T-cell (primary cell): ENCODE measurements at regions of chr5 and their contacts with region 1.

Region 1: DNA sequence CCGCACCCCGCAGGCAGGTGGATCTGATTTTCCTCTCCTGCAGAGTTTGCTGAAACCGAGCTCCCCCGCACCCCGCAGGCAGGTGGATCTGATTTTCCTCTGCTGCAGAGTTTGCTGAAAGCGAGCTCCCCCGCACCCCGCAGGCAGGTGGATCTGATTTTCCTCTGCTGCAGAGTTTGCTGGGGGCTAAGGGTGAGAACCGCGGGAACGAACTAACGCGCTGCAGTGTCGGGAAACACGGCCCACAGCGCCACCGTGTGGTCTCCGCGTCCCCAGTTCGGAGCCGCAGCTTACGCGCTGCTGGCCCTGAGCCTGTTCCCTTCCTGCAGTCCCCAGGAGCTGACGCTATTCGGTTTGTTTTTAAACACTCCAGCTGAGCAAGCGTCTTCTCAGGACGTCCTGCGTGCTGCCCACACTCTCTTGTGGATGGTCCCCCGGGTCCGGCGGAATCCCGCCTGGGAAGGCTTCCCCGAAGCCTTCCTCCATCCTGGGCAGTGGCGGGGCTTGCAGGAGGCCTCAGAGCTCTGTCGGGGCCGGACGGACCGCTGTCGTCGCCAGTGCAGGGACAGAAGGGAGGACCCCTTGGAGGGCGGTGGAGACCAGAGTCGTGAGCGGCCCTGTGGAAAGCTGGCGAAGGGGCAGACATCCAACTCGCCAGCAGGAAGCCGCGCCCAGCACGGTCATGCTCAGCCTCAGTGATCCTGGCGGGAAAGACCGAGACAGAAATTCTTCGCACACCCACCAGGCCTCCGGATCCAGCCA is 121.2 kb upstream of the LPCAT1 start:
- DNase-seq: peak; percentile 38 to 93 (median 72)
- ATAC-seq: peak; percentile 88 to 92 (median 88)
- H3K4me3 ChIP-seq: peak overlapping the region in 1 of 2 donors; percentile 44
- H3K4me3 Mint-ChIP-seq: peak overlapping the region in 1 of 3 donors; percentile 30
- H3K27ac ChIP-seq: no peak overlapping the region
- H3K27ac Mint-ChIP-seq: no peak overlapping the region
- H3K4me1 ChIP-seq: peaks cover 0 to 17% of the 10 kb centered on the region in 2 experiments
- H3K4me1 Mint-ChIP-seq: peaks cover 10 to 18% (median 10%) of the 10 kb centered on the region in 3 donors
- H3K27me3 ChIP-seq: peaks cover 5 to 43% of the 10 kb centered on the region in 2 experiments
- H3K27me3 Mint-ChIP-seq: peaks cover 26 to 54% of the 10 kb centered on the region in 2 donors

Region 2: GRCh38 chr5:343461-344401 is 1301.3 kb before region 1 on chr5:
- CTCF ChIA-PET with region 1: no interaction called
- POLR2A ChIA-PET with region 1: no interaction called
- DNase-seq: peak in 27 of 35 experiments; percentile 6 to 63 (median 26)
- ATAC-seq: peak; percentile 69 to 88 (median 80)
- H3K4me3 ChIP-seq: peak overlapping the region in 1 of 2 donors; percentile 19
- H3K4me3 Mint-ChIP-seq: peak overlapping the region; percentile 62 to 76 (median 72)
- H3K27ac ChIP-seq: no peak overlapping the region
- H3K27ac Mint-ChIP-seq: no peak overlapping the region
- H3K4me1 ChIP-seq: peaks cover 7 to 17% of the 10 kb centered on the region in 2 experiments
- H3K4me1 Mint-ChIP-seq: peaks cover 5 to 19% (median 5%) of the 10 kb centered on the region in 3 donors
- H3K27me3 ChIP-seq: peaks cover 0 to 33% of the 10 kb centered on the region in 2 experiments
- H3K27me3 Mint-ChIP-seq: peaks cover 14 to 31% of the 10 kb centered on the region in 2 donors

Region 3: DNA sequence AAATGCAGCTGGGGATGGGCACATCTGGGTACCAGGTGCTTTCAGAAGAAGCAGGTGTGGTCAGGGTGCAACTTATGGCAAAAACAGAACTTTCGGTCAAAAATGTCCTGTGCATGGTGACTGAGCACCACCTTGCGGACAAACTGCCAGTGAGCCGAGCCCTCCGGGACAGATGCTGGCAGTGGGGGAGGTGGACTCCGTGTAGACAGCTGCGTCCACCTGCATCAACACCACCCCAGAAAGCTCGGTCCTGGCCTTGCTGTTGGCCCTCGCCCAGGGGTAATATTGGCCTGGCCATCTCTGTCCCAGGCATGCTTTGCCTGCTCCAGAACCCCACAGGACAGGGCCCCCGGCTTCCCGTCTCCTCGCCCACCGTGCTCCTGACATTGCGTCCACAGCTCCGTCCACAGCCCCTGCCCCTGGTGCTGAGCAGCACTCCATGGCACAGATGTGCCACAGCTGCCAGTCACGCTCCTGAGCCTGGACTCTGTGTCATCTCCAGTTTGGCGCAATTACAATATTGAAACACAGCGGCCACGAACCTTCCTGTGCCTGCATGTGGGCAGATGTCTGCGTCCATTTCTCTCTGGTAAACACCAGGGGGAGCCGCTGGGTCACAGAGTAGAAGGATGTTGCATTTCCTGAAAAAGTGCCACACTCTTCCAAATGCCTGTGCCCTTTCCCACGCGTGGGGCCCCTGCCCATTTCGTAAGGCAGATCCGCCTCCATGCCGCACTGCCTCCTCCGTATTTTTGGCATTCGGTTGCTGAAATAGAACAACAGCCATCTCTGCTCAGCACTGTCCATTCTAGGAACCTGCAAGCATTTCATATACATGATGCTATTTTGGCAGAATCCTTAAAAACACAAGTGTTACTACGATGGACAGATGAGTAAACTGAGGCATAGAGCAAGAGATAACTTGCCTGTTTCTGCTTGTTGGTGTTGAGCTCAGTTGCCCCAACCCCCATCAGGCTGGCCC is 477.0 kb before region 1 on chr5:
- CTCF ChIA-PET with region 1: interaction called, 3 to 16 read pairs
- POLR2A ChIA-PET with region 1: no interaction called
- DNase-seq: peak; percentile 35 to 83 (median 63)
- ATAC-seq: peak; percentile 80 to 87 (median 82)
- H3K4me3 ChIP-seq: peak overlapping the region in 1 of 2 donors; percentile 19
- H3K4me3 Mint-ChIP-seq: peak overlapping the region; percentile 69 to 73 (median 69)
- H3K27ac ChIP-seq: no peak overlapping the region
- H3K27ac Mint-ChIP-seq: peak overlapping the region in 1 of 2 donors; percentile 48
- H3K4me1 ChIP-seq: peaks cover 0 to 16% of the 10 kb centered on the region in 2 experiments
- H3K4me1 Mint-ChIP-seq: peaks cover 7 to 9% (median 8%) of the 10 kb centered on the region in 3 donors
- H3K27me3 ChIP-seq: peaks cover 0 to 41% of the 10 kb centered on the region in 2 experiments
- H3K27me3 Mint-ChIP-seq: peaks cover 14 to 21% of the 10 kb centered on the region in 2 donors

Region 4: DNA sequence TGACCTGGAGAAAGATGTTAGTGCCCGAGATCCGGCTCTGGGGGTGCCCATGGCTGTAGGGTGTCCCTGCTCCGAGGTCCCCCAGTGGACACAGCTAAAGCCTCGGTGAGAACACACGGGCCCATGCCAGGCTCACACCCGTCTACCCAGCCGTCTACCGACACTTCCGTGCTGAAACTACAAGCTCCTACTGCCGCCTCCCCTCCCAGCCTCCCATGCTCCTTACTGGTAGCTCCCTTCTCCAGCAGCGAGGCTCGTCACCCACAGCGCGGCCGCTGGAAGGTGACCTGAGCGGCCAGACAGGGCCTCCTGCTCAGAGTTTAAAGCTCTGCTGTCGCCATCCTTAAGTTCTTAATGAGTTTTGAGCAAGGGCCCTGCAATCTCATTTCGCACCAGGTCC is 266.9 kb before region 1 on chr5:
- CTCF ChIA-PET with region 1: interaction called, 4 to 10 read pairs
- POLR2A ChIA-PET with region 1: no interaction called
- DNase-seq: no peak
- ATAC-seq: no peak
- H3K4me3 ChIP-seq: no peak overlapping the region
- H3K4me3 Mint-ChIP-seq: no peak overlapping the region
- H3K27ac ChIP-seq: no peak overlapping the region
- H3K27ac Mint-ChIP-seq: no peak overlapping the region
- H3K4me1 ChIP-seq: peaks cover 0 to 28% of the 10 kb centered on the region in 2 experiments
- H3K4me1 Mint-ChIP-seq: peaks cover 11 to 19% (median 14%) of the 10 kb centered on the region in 3 donors
- H3K27me3 ChIP-seq: peaks cover 0 to 23% of the 10 kb centered on the region in 2 experiments
- H3K27me3 Mint-ChIP-seq: peaks cover 0 to 7% of the 10 kb centered on the region in 2 donors

Region 5: GRCh38 chr5:1633605-1634336 is 11.2 kb before region 1 on chr5:
- CTCF ChIA-PET with region 1: no interaction called
- POLR2A ChIA-PET with region 1: no interaction called
- DNase-seq: peak in 34 of 35 experiments; percentile 26 to 81 (median 46)
- ATAC-seq: peak; percentile 89 to 98 (median 92)
- H3K4me3 ChIP-seq: peak overlapping the region; percentile 70 to 77
- H3K4me3 Mint-ChIP-seq: peak overlapping the region; percentile 92 to 93 (median 92)
- H3K27ac ChIP-seq: peak overlapping the region; percentile 70
- H3K27ac Mint-ChIP-seq: peak overlapping the region; percentile 92 to 95
- H3K4me1 ChIP-seq: peaks cover 0 to 14% of the 10 kb centered on the region in 2 experiments
- H3K4me1 Mint-ChIP-seq: peaks cover 32 to 44% (median 37%) of the 10 kb centered on the region in 3 donors
- H3K27me3 ChIP-seq: no peaks in the 10 kb centered on the region
- H3K27me3 Mint-ChIP-seq: peaks cover 0 to 3% of the 10 kb centered on the region in 2 donors

Region 6: DNA sequence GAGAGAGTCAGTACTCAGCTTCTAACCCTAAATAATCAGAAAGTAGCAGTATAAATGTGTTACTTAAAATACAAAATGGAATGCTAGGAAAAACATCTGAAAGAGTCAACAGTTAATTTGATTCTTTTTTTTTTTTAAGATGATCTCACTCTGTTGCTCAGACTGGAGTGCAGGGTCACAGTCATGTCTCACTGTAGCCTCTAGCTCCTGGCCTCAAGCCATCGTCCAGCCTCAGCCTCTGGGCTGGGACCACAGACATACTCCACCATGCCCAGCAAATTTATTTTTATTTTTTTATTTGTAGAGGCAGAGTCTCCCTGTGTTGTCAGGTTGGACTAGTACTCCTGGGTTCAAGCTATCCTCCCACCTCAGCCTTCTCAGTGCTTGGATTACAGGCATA is 681.6 kb after region 1 on chr5:
- CTCF ChIA-PET with region 1: no interaction called
- POLR2A ChIA-PET with region 1: no interaction called
- DNase-seq: no peak
- ATAC-seq: no peak
- H3K4me3 ChIP-seq: no peak overlapping the region
- H3K4me3 Mint-ChIP-seq: no peak overlapping the region
- H3K27ac ChIP-seq: no peak overlapping the region
- H3K27ac Mint-ChIP-seq: no peak overlapping the region
- H3K4me1 ChIP-seq: no peaks in the 10 kb centered on the region
- H3K4me1 Mint-ChIP-seq: no peaks in the 10 kb centered on the region
- H3K27me3 ChIP-seq: peaks cover 0 to 18% of the 10 kb centered on the region in 2 experiments
- H3K27me3 Mint-ChIP-seq: peaks cover 4 to 8% of the 10 kb centered on the region in 2 donors